Activated T-helper 2 cell treated with anti-CD3 and anti-CD28 coated beads, Interferon-gamma antibody, Interleukin-2, Interleukin-4, amounts not matched to agents 10 μg/mL and 5 μg/mL and 100 μg/mL, durations not matched to agents 14 hours and 24 hours and 36 hours (primary cell): ENCODE measurements at regions of chr2 and their contacts with region 1.

Region 1: GRCh38 chr2:85865539-85866164 is 23.1 kb downstream of the ST3GAL5 start:
- DNase-seq: no peak
- H3K4me3 Mint-ChIP-seq: no peak overlapping the region
- H3K27ac Mint-ChIP-seq: no peak overlapping the region
- H3K4me1 Mint-ChIP-seq: peaks cover 56% of the 10 kb centered on the region
- H3K27me3 Mint-ChIP-seq: no peaks in the 10 kb centered on the region

Region 2: DNA sequence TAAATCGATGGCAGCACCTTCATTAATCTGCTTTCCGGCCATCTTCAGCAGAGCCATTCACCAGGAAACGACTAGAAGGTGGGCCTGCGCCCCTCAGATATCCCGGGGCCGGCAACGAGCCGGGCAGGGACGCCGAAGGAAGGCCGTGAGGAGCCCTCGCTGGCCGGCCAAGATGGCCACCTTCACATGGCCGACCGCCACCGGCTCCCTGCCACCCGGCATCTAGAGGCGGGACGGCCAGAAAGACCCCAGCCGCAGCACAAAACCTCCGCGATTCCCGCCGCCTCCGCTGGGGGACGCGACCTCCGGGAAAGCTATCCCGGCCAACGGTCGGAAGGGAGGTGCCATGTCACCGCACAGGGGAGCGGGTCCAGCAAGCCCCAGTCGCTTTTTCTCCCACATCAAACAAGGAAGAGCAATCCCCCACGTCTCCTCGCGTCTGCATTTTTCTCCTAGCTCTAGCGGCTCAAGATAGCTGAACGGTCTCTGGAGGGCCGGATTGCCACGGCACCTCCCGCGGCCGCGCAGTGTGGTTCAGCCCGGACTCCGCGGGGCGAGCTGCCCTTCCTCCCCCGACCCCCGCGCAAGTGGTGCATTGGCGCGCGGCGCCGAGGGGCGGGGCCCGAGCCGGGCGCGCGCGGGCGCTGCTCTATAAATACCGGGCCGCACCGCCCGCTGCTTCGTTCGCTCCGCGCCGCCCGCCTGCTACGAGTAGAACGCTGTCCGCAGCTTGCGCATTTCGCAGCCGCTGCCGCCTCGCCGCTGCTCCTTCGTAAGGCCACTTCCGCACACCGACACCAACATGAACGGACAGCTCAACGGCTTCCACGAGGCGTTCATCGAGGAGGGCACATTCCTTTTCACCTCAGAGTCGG is 326.9 kb before region 1 on chr2 and contains the start of gene MAT2A:
- intact Hi-C with region 1: no loop called
- DNase-seq: peak; percentile 85
- H3K4me3 Mint-ChIP-seq: peak within 1 kb of the TSS; percentile 97
- H3K27ac Mint-ChIP-seq: peak within 1 kb of the TSS; percentile 97
- H3K4me1 Mint-ChIP-seq: peaks cover 43% of the 10 kb centered on the region
- H3K27me3 Mint-ChIP-seq: no peaks in the 10 kb centered on the region
- total RNA-seq, gene MAT2A: 395 and 403 TPM in 2 replicates

Region 3: GRCh38 chr2:85741833-85742455 is 123.7 kb before region 1 on chr2:
- intact Hi-C with region 1: no loop called
- DNase-seq: no peak
- H3K4me3 Mint-ChIP-seq: no peak overlapping the region
- H3K27ac Mint-ChIP-seq: no peak overlapping the region
- H3K4me1 Mint-ChIP-seq: peaks cover 4% of the 10 kb centered on the region
- H3K27me3 Mint-ChIP-seq: peaks cover 68% of the 10 kb centered on the region

Region 4: DNA sequence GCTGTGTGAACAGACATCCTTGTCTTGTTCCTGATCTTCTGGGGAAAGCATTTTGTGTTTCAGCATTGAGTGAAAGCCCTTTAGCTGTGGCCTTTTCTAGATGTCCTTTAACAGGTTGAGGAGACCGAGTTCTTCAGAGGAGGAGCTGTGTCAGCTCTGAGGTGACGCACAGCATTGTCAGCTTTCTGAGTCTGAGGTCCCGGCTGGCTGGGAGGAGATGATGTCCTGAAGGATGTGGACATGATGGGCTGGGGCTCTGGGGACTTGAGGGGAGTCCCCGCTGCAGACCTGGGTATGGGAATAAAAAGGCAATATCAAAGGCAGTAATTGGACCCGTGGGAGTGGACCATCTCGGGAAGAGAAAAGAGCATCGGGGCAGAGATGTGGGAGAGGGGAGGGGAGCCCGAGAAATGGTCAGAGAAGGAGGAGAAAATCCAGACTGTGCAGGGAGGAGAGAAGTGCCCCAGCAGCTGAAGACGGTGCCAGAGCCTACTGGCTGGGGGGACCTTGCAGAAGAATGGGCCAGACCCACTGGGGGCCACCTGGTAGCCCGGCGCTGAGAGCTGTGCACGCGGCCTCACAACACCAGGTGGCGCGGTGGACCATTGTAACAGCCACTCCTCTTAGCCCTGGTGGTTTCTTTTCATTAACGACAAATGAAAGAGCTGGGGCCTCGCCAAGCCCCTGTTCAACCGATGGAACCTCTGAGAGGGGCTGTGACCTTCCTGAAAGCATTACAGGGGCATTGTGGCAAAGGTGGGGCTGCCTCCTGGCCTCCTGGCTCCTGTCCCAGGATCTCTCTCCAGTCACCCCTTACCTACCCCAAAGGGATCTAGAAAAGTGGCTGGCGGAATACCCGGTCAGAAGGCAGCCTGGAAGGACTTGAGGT is 38.4 kb before region 1 on chr2:
- intact Hi-C with region 1: loop called (anchors 5 kb)
- DNase-seq: peak; percentile 75
- H3K4me3 Mint-ChIP-seq: no peak overlapping the region
- H3K27ac Mint-ChIP-seq: no peak overlapping the region
- H3K4me1 Mint-ChIP-seq: peaks cover 32% of the 10 kb centered on the region
- H3K27me3 Mint-ChIP-seq: peaks cover 29% of the 10 kb centered on the region

Region 5: DNA sequence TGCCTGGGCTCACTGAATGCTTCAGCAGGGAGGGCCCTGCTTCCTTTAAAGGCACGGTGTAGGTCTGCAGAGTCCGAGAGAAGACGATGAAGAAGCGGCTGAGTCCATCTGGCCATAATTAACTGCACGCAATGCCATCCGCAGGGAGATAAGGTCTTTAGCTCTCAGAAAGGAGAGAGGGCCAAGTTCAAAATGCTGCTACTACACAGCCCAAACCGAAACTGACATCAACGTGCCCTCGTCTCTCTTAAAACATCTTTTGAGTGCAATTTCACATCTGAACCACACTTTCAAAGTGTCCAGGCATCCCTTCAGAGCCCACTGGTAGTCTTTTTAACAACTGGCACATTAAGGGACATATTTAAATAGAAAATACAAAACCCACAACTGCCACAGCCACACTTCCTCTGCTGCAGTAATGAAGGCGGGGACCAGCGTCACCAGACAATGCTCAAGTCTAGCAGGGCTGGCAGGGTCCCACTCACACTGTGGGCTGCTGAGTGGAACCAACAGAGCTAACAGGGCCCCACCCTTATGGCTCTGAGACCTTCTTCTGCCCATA is 12.6 kb before region 1 on chr2:
- intact Hi-C with region 1: loop called (anchors 1 kb)
- DNase-seq: peak; percentile 54
- H3K4me3 Mint-ChIP-seq: peak overlapping the region; percentile 75
- H3K27ac Mint-ChIP-seq: peak overlapping the region; percentile 99
- H3K4me1 Mint-ChIP-seq: peaks cover 62% of the 10 kb centered on the region
- H3K27me3 Mint-ChIP-seq: no peaks in the 10 kb centered on the region

Region 6: DNA sequence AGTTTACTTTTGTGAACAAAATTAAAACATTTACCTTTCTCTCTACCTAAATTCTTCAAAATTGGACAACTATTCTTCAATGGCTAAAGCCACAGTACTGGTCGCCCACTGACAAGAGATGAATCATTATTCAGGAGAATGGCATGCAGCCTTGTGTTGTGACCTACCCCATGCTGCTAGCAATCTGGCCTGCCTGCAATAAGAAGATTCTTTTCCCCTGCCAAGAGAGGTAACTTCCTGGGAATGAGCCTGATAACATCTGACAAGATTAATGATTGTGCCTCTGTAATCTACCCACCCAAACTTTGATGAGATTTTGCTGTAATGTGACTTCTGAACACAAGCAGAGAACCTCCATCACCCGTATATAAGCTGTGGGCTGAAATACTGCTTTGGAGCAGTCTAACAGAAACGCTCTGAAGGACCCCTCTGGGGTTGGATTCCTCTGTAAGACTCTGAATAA is 70.1 kb after region 1 on chr2:
- intact Hi-C with region 1: loop called (anchors 1 kb)
- DNase-seq: no peak
- H3K4me3 Mint-ChIP-seq: no peak overlapping the region
- H3K27ac Mint-ChIP-seq: no peak overlapping the region
- H3K4me1 Mint-ChIP-seq: peaks cover 21% of the 10 kb centered on the region
- H3K27me3 Mint-ChIP-seq: peaks cover 9% of the 10 kb centered on the region

Region 7: DNA sequence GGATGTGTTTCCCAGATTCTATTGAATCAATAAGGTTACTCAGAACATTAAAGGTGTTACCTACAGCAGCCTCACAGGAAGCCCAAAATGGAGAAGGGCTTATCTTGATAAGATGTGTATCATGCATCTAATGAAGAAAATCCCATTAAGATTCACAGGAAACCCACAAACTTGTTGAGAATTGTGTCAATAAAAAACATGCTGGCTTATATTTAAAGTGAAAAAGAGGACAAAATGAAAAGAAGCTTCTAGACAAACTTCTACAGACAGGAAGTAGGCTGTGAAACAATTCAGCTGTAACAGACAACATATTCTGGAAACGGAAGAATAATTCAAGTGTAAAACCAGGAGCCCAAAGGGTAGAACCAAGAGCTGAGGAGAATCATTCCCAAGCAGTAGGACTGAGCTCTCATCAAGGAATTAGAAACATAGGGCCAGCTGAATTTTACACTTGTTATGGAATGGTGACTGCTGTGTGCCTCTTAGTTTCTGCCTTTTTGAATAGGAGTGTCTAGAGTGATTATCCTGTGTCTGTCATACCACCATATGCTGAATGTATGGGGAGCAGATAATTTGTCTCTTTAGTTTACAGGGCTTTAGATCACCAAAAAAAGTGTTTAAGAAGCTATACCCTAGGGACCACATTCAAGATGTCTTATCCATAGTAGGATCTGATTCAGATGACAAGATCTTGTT is 320.0 kb after region 1 on chr2:
- intact Hi-C with region 1: loop called (anchors 10 kb)
- DNase-seq: no peak
- H3K4me3 Mint-ChIP-seq: peak overlapping the region; percentile 55
- H3K27ac Mint-ChIP-seq: peak overlapping the region; percentile 75
- H3K4me1 Mint-ChIP-seq: peaks cover 75% of the 10 kb centered on the region
- H3K27me3 Mint-ChIP-seq: no peaks in the 10 kb centered on the region